Left ventricle myocardium inferior (tissue), 1 donor: ENCODE measurements at regions of chr3 and their contacts with region 1.

Region 1: DNA sequence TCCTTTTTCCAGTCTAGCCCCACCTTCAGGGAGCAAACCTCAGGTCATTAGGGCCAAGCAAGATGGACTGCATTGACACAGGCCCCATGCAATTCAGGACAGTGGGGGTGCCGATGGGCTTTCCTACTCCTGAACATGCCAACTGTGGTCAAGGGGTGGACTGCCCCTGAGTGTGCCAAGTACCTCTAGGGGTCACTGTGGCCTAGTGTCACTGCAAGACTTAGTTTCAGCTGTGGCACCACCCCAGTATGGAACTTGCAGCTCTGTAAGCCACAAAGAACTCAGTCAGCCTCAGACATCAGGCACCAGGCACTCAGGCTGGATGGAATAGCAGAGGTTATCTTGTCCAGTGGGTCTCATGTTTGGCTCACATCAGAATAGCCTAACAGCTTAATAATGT is 32.3 kb downstream of the EXOG start:
- DNase-seq: no peak
- H3K4me3 ChIP-seq: no peak overlapping the region
- H3K27ac ChIP-seq: peak overlapping the region; percentile 50
- H3K4me1 ChIP-seq: peaks cover 46% of the 10 kb centered on the region
- H3K27me3 ChIP-seq: no peaks in the 10 kb centered on the region
- CTCF ChIP-seq: peak; percentile 21

Region 2: GRCh38 chr3:38651154-38651789 is 122.8 kb after region 1 on chr3:
- intact Hi-C with region 1: loop called (anchors 5 kb)
- DNase-seq: peak; percentile 61
- H3K4me3 ChIP-seq: no peak overlapping the region
- H3K27ac ChIP-seq: no peak overlapping the region
- H3K4me1 ChIP-seq: peaks cover 35% of the 10 kb centered on the region
- H3K27me3 ChIP-seq: peaks cover 68% of the 10 kb centered on the region
- CTCF ChIP-seq: peak; percentile 99

Region 3: GRCh38 chr3:39051647-39052561 is 523.4 kb after region 1 on chr3 and contains the starts of genes SCN11A and WDR48:
- intact Hi-C with region 1: no loop called
- DNase-seq: peak; percentile 94
- H3K4me3 ChIP-seq: peak within 1 kb of the TSS; percentile 100
- H3K27ac ChIP-seq: peak within 1 kb of the TSS; percentile 95
- H3K4me1 ChIP-seq: peaks cover 44% of the 10 kb centered on the region
- H3K27me3 ChIP-seq: no peaks in the 10 kb centered on the region
- CTCF ChIP-seq: no peak
- total RNA-seq, gene SCN11A: 0.05 TPM
- total RNA-seq, gene WDR48: 33.6 TPM